T-cell (primary cell): ENCODE measurements at regions of chr16 and their contacts with region 1.

Region 1: GRCh38 chr16:14462811-14463210 is 167.2 kb downstream of the PARN start:
- DNase-seq: no peak
- ATAC-seq: no peak
- H3K4me3 ChIP-seq: no peak overlapping the region
- H3K4me3 Mint-ChIP-seq: no peak overlapping the region
- H3K27ac ChIP-seq: no peak overlapping the region
- H3K27ac Mint-ChIP-seq: no peak overlapping the region
- H3K4me1 ChIP-seq: no peaks in the 10 kb centered on the region
- H3K4me1 Mint-ChIP-seq: peaks cover 0 to 15% (median 2%) of the 10 kb centered on the region in 3 donors
- H3K27me3 ChIP-seq: no peaks in the 10 kb centered on the region
- H3K27me3 Mint-ChIP-seq: no peaks in the 10 kb centered on the region

Region 2: DNA sequence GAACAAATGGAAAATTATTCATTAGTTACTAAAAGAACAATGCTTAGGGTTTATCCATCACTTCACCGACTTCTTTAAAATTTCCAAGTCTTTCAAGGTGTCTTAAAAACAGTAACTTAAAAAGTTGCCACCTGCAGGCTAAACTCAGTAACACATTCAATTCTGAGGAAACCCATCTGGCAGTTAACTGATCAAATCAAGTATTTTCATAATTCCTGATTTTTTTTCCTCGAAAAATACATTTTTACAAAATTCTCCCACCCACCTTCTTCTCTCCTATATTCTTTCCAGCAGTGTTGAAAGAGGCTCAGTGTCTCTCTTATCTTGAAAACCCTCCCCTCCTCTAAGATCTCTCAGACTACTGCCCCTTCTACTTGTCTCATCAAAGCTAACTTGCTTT is 137.4 kb after region 1 on chr16:
- CTCF ChIA-PET with region 1: interaction called in 1 of 2 experiments, 10 read pairs
- POLR2A ChIA-PET with region 1: no interaction called
- DNase-seq: peak in 1 of 35 experiments; percentile 39
- ATAC-seq: no peak
- H3K4me3 ChIP-seq: no peak overlapping the region
- H3K4me3 Mint-ChIP-seq: no peak overlapping the region
- H3K27ac ChIP-seq: no peak overlapping the region
- H3K27ac Mint-ChIP-seq: peak overlapping the region in 1 of 2 donors; percentile 47
- H3K4me1 ChIP-seq: no peaks in the 10 kb centered on the region
- H3K4me1 Mint-ChIP-seq: peaks cover 0 to 18% (median 0%) of the 10 kb centered on the region in 3 donors
- H3K27me3 ChIP-seq: no peaks in the 10 kb centered on the region
- H3K27me3 Mint-ChIP-seq: no peaks in the 10 kb centered on the region